H1 (cell line): ENCODE measurements at regions of chr9 and their contacts with region 1.

Region 1: GRCh38 chr9:35732122-35732799 is at the starts of genes CREB3 and TLN1:
- DNase-seq: peak; percentile 90 to 94
- H3K4me3 ChIP-seq: peak within 1 kb of the TSS; percentile 79 to 96 (median 90)
- H3K27ac ChIP-seq: peak within 1 kb of the TSS; percentile 55
- H3K4me1 ChIP-seq: peaks cover 21 to 42% (median 26%) of the 10 kb centered on the region in 4 experiments
- H3K27me3 ChIP-seq: no peaks in the 10 kb centered on the region
- CTCF ChIP-seq: 0 out of 4 replicates have a peak, but pooled peaks of 1 of the 3 experiments have one; percentile 11
- EP300 ChIP-seq: 0 out of 3 replicates have a peak, but pooled peaks of 1 of the 2 experiments have one; percentile 7
- POLR2A ChIP-seq: peak; percentile 76 to 77
- RAD21 ChIP-seq: no peak
- total RNA-seq, gene CREB3: 24.4 and 26.5 TPM in 2 replicates
- total RNA-seq, gene TLN1: 87.9 and 90.1 TPM in 2 replicates

Region 2: GRCh38 chr9:35646533-35647265 is 85.6 kb before region 1 on chr9:
- CTCF ChIA-PET with region 1: interaction called, 12 read pairs
- POLR2A ChIA-PET with region 1: interaction called, 9 read pairs
- DNase-seq: peak in 1 of 2 experiments; percentile 98
- H3K4me3 ChIP-seq: peak overlapping the region; percentile 56 to 79 (median 60)
- H3K27ac ChIP-seq: no peak overlapping the region
- H3K4me1 ChIP-seq: peaks cover 0 to 17% (median 12%) of the 10 kb centered on the region in 4 experiments; a peak in 5 of 7 replicates
- H3K27me3 ChIP-seq: no peaks in the 10 kb centered on the region
- CTCF ChIP-seq: peak; percentile 89 to 98 (median 93)
- EP300 ChIP-seq: no peak
- POLR2A ChIP-seq: peak in 1 of 2 experiments; percentile 66; a peak in 1 of 3 replicates
- RAD21 ChIP-seq: peak; percentile 77 to 84

Region 3: DNA sequence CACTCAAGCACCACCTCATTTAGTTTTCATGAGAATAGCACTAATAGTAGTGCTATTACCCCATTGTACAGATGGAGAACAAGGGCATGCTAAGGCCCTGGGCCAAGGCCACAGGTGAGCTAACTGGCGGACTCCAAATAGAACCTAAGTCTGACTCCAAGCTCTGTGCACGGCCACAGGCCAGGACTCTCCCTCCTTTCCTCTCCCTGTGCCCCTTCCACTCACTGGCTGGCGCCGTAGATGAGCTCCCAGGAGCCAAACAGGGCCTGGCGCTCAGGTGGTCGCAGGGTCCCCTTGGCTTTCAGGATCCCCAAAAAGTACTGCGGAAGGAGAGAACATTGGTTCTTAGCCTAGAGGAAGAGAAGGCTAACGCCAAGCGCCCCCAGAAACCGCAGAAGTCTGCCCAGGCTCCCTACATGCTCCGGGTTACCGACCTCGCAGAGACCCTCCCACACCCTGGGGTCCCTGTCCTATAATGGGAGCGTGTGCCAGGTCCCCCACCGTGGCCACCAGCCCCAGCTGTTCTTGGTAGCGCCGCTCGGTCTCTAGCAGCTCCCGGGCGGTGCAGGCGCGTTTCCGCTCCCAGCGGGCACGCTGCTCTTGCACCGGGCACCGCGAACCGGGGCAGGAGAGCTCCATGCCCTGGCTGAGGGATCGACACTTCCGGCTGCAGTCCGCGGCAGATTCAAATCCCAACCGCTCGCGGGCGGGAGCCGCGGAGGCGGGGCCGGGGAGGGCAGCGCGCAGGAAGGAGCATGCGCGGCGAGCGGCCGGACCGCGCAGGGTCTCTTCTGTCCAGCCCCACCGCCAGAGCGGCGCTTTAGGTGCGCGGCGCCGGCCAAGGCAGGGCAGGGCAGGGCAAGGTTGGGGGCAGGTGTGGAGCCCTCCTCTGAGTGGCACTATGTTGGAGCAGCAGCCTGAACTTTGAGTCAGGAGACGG is 67.5 kb before region 1 on chr9 and contains the start of gene ARHGEF39:
- CTCF ChIA-PET with region 1: interaction called, 170 read pairs
- POLR2A ChIA-PET with region 1: interaction called, 10 read pairs
- DNase-seq: peak; percentile 81 to 92
- H3K4me3 ChIP-seq: peak within 1 kb of the TSS; percentile 50 to 84 (median 78)
- H3K27ac ChIP-seq: 0 out of 2 replicates have a peak within 1 kb of the TSS, but pooled peaks have one; percentile 56
- H3K4me1 ChIP-seq: peaks cover 0 to 5% (median 1%) of the 10 kb centered on the region in 4 experiments; a peak in 5 of 7 replicates
- H3K27me3 ChIP-seq: no peaks in the 10 kb centered on the region
- CTCF ChIP-seq: peak; percentile 58 to 65 (median 60); a peak in 3 of 4 replicates
- EP300 ChIP-seq: no peak
- POLR2A ChIP-seq: peak in 1 of 2 experiments; percentile 75; a peak in 2 of 3 replicates
- RAD21 ChIP-seq: peak; percentile 41 to 44
- total RNA-seq, gene ARHGEF39: 17.5 and 18.6 TPM in 2 replicates

Region 4: GRCh38 chr9:35690431-35691333 is 41.6 kb before region 1 on chr9:
- CTCF ChIA-PET with region 1: interaction called, 95 read pairs
- POLR2A ChIA-PET with region 1: interaction called, 158 read pairs
- DNase-seq: peak in 1 of 2 experiments; percentile 84
- H3K4me3 ChIP-seq: peak overlapping the region; percentile 72 to 99 (median 82)
- H3K27ac ChIP-seq: no peak overlapping the region
- H3K4me1 ChIP-seq: peaks cover 6 to 15% (median 8%) of the 10 kb centered on the region in 4 experiments; a peak in 6 of 7 replicates
- H3K27me3 ChIP-seq: no peaks in the 10 kb centered on the region
- CTCF ChIP-seq: no peak
- EP300 ChIP-seq: no peak
- POLR2A ChIP-seq: no peak
- RAD21 ChIP-seq: no peak

Region 5: GRCh38 chr9:35705836-35706430 is 26.3 kb before region 1 on chr9:
- CTCF ChIA-PET with region 1: interaction called, 198 read pairs
- POLR2A ChIA-PET with region 1: interaction called, 158 read pairs
- DNase-seq: no peak
- H3K4me3 ChIP-seq: no peak overlapping the region
- H3K27ac ChIP-seq: no peak overlapping the region
- H3K4me1 ChIP-seq: no peaks in the 10 kb centered on the region
- H3K27me3 ChIP-seq: no peaks in the 10 kb centered on the region
- CTCF ChIP-seq: no peak
- EP300 ChIP-seq: no peak
- POLR2A ChIP-seq: no peak
- RAD21 ChIP-seq: no peak

Region 6: DNA sequence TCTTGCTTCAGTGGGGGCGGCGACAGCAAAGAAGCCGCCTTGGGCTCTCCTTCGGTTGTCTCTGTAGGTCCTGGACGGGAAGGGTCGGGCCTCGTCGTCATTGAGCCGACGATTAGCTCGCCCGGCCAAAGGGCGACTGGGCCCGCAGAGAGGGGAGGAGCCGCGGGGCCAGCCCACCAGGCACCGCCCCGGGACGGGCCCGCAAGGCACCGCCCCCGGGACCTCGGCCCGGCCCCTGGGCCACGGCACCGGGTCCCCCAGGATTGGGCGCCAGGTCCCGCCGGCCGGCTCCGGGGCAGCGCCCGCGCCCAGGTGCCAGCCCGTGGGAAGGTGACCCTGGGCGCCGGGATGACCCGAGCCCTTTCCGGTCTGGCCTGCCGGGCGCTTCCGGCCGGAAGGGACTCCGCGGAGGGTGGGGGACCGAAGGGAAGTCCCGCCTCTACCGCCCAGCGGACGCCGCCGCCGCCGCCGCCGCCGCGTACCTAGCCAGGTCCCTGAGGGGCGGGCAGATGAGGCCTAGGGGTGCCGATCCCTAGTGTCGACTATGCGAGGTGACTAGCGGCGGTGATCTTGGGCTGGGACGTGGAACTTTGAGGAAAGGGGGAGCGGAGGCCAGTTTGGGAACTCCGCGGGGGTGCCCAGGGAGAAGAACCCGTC is 16.7 kb after region 1 on chr9 and contains the starts of genes GBA2 and RGP1:
- CTCF ChIA-PET with region 1: interaction called, 87 read pairs
- POLR2A ChIA-PET with region 1: interaction called, 59 read pairs
- DNase-seq: peak in 1 of 2 experiments; percentile 88
- H3K4me3 ChIP-seq: peak within 1 kb of the TSS; percentile 88 to 98 (median 94)
- H3K27ac ChIP-seq: peak within 1 kb of the TSS; percentile 74; the same call in 1 of the 2 replicates
- H3K4me1 ChIP-seq: peaks cover 0 to 19% (median 5%) of the 10 kb centered on the region in 4 experiments; a peak in 5 of 7 replicates
- H3K27me3 ChIP-seq: no peaks in the 10 kb centered on the region
- CTCF ChIP-seq: no peak
- EP300 ChIP-seq: 0 out of 3 replicates have a peak, but pooled peaks of 1 of the 2 experiments have one; percentile 70
- POLR2A ChIP-seq: peak; percentile 39 to 72
- RAD21 ChIP-seq: no peak
- total RNA-seq, gene GBA2: 69.1 and 71.9 TPM in 2 replicates
- total RNA-seq, gene RGP1: 21.8 and 22.7 TPM in 2 replicates

Region 7: GRCh38 chr9:35790385-35791296 is 58.4 kb after region 1 on chr9:
- CTCF ChIA-PET with region 1: interaction called, 15 read pairs
- POLR2A ChIA-PET with region 1: interaction called, 5 read pairs
- DNase-seq: peak in 1 of 2 experiments; percentile 78
- H3K4me3 ChIP-seq: peak overlapping the region; percentile 39 to 65 (median 52); a peak in 7 of 8 replicates
- H3K27ac ChIP-seq: no peak overlapping the region
- H3K4me1 ChIP-seq: peaks cover 5 to 13% (median 7%) of the 10 kb centered on the region in 4 experiments; a peak in 6 of 7 replicates
- H3K27me3 ChIP-seq: peaks cover 0 to 10% (median 0%) of the 10 kb centered on the region in 4 experiments; a peak in 4 of 7 replicates
- CTCF ChIP-seq: peak; percentile 79 to 92 (median 90)
- EP300 ChIP-seq: no peak
- POLR2A ChIP-seq: no peak
- RAD21 ChIP-seq: peak; percentile 94